Naive thymus-derived CD4-positive, alpha-beta T cell (primary cell): ENCODE measurements at regions of chr1 and their contacts with region 1.

Region 1: DNA sequence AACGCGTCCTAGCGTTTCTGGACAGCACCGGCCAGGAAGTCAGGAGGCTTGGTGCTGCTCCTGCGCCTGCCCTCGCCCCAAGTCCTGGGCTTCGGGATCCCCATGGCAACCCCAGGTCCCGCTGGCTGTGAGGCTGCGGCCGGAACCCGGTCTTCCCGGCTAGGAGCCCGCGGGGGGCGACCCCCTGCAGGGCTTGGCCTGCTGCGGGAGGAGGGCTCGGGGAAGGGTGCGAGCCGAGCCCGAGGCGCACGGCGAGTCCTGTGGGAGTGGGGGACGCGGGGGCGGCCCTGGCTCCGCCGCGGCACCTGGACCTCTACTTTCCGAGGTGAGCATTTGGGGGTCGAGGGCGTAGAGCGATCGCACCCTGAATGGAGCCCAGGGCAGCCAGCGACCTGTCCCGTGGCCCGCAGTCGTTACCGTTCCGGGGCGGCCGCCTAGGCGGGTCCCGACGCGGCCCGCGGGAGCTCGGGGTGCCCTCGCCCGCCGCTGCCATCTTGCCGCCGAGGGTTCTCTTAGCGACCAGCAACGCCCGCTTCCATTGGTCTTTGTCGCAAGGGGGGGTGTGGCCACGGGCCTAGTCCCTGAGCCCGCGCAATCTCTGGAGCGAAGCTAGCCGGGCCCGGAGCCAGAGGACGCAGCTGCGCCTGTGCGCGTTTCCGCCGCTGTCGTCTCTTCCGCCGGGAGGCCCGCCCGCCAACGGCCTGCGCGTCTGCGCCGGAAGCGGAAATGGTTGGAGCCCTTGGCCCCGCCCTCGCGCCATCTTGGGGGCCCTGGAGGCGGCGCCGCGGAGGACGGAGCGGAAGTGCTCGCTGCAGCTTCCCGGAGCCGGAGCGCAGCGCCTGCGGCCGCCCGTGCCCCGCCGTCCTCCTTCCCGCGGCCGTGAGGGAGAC is at the starts of genes MORN1 and RER1:
- DNase-seq: peak; percentile 96 to 100 (median 99)
- ATAC-seq: peak; percentile 98
- H3K4me3 ChIP-seq: peak within 1 kb of the TSS; percentile 77
- H3K4me3 Mint-ChIP-seq: peak within 1 kb of the TSS; percentile 80 to 93 (median 90)
- H3K27ac ChIP-seq: peak within 1 kb of the TSS; percentile 82
- H3K27ac Mint-ChIP-seq: peak within 1 kb of the TSS; percentile 63 to 96 (median 88)
- H3K4me1 ChIP-seq: peaks cover 23 to 33% of the 10 kb centered on the region in 2 donors
- H3K4me1 Mint-ChIP-seq: peaks cover 23 to 41% (median 31%) of the 10 kb centered on the region in 7 donors
- H3K27me3 ChIP-seq: no peaks in the 10 kb centered on the region
- H3K27me3 Mint-ChIP-seq: no peaks in the 10 kb centered on the region
- total RNA-seq, gene MORN1: 8.5 to 16.4 (median 11.2) TPM
- total RNA-seq, gene RER1: 71.0 to 150 (median 136) TPM

Region 2: DNA sequence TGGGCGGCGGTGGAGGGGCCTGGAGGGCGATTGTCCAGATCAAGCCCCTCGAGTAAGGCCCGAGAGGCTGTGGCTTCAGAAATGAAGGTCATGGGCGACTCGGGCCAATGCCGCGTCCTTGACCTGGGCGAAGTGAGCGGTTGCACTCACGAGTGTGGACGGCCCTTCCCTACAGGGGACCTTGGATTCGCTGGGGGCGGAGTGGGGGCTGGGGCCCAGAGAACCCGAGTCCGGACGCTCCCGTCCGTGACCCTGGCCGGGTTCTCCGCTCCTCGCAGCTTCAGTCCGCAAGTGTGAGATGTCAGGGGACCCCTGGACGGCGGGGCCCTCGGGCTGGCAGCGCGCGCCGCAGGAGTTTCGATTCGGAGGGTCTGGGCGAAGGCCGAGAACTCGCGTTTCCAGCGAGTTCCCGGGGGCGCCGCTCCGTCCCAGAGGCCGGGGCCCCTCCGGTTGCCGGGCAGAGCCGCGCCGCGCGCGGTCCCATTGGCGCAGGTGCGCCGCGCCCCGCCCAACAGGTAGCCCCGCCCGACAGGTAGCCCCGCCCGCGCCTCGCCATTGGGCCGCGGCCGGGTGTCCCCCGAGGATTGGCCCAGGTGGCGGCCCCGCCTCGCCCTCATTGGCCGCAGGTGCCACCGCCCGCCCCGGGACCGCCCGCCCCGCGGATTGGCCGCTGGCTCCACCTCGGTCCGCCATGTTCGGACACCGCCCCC is 341.4 kb before region 1 on chr1 and contains the start of gene PRKCZ:
- CTCF ChIA-PET with region 1: no interaction called
- POLR2A ChIA-PET with region 1: no interaction called
- intact Hi-C with region 1: loop called in 1 of 2 experiments (anchors 2 kb)
- DNase-seq: peak; percentile 76 to 96 (median 92)
- ATAC-seq: peak; percentile 99
- H3K4me3 ChIP-seq: peak within 1 kb of the TSS; percentile 73
- H3K4me3 Mint-ChIP-seq: peak within 1 kb of the TSS; percentile 64 to 89 (median 80)
- H3K27ac ChIP-seq: peak within 1 kb of the TSS; percentile 70
- H3K27ac Mint-ChIP-seq: peak within 1 kb of the TSS in 6 of 9 donors; percentile 5 to 82 (median 50)
- H3K4me1 ChIP-seq: peaks cover 7 to 14% of the 10 kb centered on the region in 2 donors
- H3K4me1 Mint-ChIP-seq: peaks cover 10 to 35% (median 22%) of the 10 kb centered on the region in 7 donors
- H3K27me3 ChIP-seq: no peaks in the 10 kb centered on the region
- H3K27me3 Mint-ChIP-seq: peaks cover 0 to 45% (median 5%) of the 10 kb centered on the region in 5 donors
- total RNA-seq, gene PRKCZ: 3.6 to 29.6 (median 24.5) TPM

Region 3: DNA sequence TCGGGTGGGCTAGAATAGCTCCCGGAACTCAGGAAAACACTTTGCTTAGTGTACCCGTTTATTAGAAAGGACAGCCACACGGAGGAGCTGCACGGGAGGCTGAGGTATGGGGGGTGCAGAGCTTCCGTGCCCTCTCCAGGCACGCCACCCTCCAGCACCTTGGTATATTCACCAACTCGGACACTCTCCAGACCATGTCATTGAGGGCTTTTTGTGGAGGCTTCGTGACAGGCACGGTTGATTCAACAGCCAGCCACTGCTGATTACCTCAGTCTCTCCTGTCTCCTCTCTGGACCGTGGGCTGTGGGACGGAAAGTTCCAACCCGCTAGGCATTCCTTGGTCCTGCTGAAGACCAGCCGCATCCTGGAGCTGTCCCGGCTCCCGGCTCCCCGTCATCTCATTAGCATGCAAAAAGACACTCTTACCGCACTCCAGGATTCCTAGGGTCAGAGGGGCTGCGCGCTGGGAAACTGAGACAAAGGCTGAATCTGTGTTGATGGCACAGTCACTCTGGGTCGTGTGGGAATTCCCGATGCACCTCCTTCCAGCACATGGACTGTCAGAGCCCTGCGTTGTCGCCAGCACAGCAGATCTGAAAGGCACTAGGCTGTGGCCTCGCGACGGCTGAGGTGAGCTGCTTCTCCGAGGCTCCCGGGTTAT is 275.5 kb before region 1 on chr1:
- CTCF ChIA-PET with region 1: no interaction called
- POLR2A ChIA-PET with region 1: no interaction called
- intact Hi-C with region 1: no loop called
- DNase-seq: peak in 1 of 9 donors; percentile 5
- ATAC-seq: no peak
- H3K4me3 ChIP-seq: no peak overlapping the region
- H3K4me3 Mint-ChIP-seq: no peak overlapping the region
- H3K27ac ChIP-seq: no peak overlapping the region
- H3K27ac Mint-ChIP-seq: peak overlapping the region in 1 of 9 donors; percentile 47
- H3K4me1 ChIP-seq: no peaks in the 10 kb centered on the region
- H3K4me1 Mint-ChIP-seq: peaks cover 0 to 15% (median 10%) of the 10 kb centered on the region in 7 donors
- H3K27me3 ChIP-seq: no peaks in the 10 kb centered on the region
- H3K27me3 Mint-ChIP-seq: peaks cover 0 to 1% (median 0%) of the 10 kb centered on the region in 5 donors

Region 4: GRCh38 chr1:2163205-2163604 is 228.1 kb before region 1 on chr1:
- CTCF ChIA-PET with region 1: no interaction called
- POLR2A ChIA-PET with region 1: no interaction called
- intact Hi-C with region 1: no loop called
- DNase-seq: peak in 1 of 9 donors; percentile 8
- ATAC-seq: no peak
- H3K4me3 ChIP-seq: no peak overlapping the region
- H3K4me3 Mint-ChIP-seq: peak overlapping the region in 1 of 10 donors; percentile 15
- H3K27ac ChIP-seq: no peak overlapping the region
- H3K27ac Mint-ChIP-seq: peak overlapping the region in 3 of 9 donors; percentile 41 to 76 (median 62)
- H3K4me1 ChIP-seq: no peaks in the 10 kb centered on the region
- H3K4me1 Mint-ChIP-seq: peaks cover 3 to 14% (median 9%) of the 10 kb centered on the region in 7 donors
- H3K27me3 ChIP-seq: no peaks in the 10 kb centered on the region
- H3K27me3 Mint-ChIP-seq: no peaks in the 10 kb centered on the region

Region 5: DNA sequence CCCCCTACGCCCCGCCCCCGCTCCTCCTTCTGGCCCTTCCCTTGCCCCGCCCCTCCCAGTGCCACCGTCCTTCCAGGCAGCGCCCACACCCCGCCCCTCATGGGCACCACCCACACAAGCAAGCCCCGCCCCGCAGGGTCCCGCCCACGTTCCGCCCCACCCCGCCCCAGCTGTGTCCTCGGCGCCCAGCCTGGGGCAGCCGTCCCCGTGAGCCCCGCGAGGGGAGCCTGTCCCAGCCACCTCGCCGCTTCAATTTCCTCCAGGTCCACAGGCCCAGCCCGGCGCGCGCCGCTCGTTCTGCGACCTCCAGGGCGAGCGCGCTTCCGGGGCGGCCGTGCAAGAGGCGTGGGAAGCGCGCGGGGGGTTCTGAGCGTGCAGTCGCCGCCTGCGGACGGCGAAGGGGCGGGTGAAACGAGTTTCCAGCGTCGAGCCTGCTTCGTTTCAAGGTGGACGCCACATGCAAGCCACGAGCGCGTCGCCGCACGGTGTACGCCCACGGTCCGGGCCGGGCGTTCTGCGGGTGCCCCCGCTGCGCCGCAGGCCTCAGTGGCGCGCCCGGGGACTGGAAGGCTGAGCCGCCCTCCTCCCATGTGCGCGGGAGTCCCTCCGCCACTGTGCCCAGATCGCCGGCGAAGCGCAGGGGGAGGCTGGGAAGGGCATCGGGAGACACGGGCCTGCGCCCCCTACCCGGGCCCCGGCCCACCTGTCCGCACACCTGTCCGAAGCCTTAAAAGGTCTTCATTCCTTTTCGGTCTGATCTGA is 185.9 kb before region 1 on chr1:
- CTCF ChIA-PET with region 1: no interaction called
- POLR2A ChIA-PET with region 1: interaction called, 9 read pairs
- intact Hi-C with region 1: loop called in 1 of 2 experiments (anchors 1 kb)
- DNase-seq: peak; percentile 86 to 94 (median 93)
- ATAC-seq: peak; percentile 98
- H3K4me3 ChIP-seq: peak overlapping the region; percentile 70
- H3K4me3 Mint-ChIP-seq: peak overlapping the region; percentile 53 to 79 (median 68)
- H3K27ac ChIP-seq: peak overlapping the region; percentile 60
- H3K27ac Mint-ChIP-seq: peak overlapping the region in 5 of 9 donors; percentile 17 to 65 (median 56)
- H3K4me1 ChIP-seq: peaks cover 0 to 6% of the 10 kb centered on the region in 2 donors
- H3K4me1 Mint-ChIP-seq: peaks cover 0 to 9% (median 4%) of the 10 kb centered on the region in 7 donors
- H3K27me3 ChIP-seq: no peaks in the 10 kb centered on the region
- H3K27me3 Mint-ChIP-seq: peaks cover 0 to 4% (median 0%) of the 10 kb centered on the region in 5 donors

Region 6: DNA sequence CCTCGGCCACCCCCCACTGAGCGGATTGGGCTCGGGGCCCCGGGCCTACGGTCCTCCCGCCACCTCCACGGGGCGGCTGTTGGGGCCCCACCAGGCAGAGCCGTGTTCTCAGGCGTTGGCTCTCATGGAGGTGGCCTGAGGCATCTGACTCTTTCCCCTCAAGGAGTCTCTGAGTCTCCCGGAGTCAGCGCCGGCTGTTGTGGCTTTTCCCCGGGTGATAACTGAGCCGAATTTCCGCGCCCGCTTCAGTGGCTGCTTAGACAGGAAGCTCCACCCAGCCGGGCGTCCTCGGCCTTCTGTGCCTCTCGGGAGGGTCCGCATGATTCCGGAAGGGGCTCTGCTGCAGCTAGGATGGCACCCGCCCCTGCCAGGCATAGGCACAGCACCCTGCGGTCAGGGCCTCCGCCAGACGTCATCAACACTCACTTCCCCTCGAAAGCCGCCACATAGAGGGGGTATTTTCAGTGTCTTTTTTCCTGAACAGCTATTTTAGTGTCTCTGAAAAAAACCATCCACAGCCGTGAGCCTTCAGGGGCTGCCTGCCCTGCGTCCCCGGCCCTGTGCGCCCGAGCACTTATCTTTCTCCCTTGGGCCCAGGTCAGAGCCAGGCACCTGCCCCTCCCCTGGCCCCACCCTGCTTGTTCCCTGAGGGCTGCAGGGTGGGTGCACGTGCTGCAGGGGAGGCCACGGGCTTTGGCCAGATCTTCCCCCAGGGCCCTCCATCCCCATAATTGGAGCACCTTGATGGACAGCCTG is 90.3 kb before region 1 on chr1:
- CTCF ChIA-PET with region 1: no interaction called
- POLR2A ChIA-PET with region 1: interaction called, 3 read pairs
- intact Hi-C with region 1: loop called in 1 of 2 experiments (anchors 1 kb)
- DNase-seq: peak; percentile 69 to 98 (median 97)
- ATAC-seq: peak; percentile 90
- H3K4me3 ChIP-seq: peak overlapping the region; percentile 77
- H3K4me3 Mint-ChIP-seq: peak overlapping the region; percentile 79 to 89 (median 85)
- H3K27ac ChIP-seq: peak overlapping the region; percentile 98
- H3K27ac Mint-ChIP-seq: peak overlapping the region; percentile 91 to 99 (median 99)
- H3K4me1 ChIP-seq: peaks cover 36 to 54% of the 10 kb centered on the region in 2 donors
- H3K4me1 Mint-ChIP-seq: peaks cover 14 to 72% (median 42%) of the 10 kb centered on the region in 7 donors
- H3K27me3 ChIP-seq: no peaks in the 10 kb centered on the region
- H3K27me3 Mint-ChIP-seq: no peaks in the 10 kb centered on the region

Region 7: DNA sequence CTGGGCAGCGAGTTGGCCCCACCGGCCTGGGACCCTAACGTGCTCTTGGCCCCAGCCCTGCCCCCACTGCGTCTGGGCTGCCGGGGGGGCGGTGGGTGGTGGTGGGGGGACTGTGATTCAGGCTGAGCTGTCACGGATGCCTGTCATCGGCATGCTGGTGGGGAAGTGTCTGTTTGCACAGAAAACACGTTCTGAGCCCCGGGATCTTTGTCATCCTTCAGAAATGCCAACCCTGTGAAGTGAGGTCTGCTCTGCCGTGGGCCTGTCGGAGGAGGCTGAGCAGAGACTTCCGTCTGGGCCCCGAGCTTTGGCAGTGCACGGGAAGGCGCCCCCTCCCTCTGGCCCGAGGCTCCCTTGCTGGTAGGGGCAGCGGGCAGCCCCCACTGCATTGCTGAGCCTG is 60.5 kb after region 1 on chr1:
- CTCF ChIA-PET with region 1: no interaction called
- POLR2A ChIA-PET with region 1: no interaction called
- intact Hi-C with region 1: no loop called
- DNase-seq: no peak
- ATAC-seq: no peak
- H3K4me3 ChIP-seq: no peak overlapping the region
- H3K4me3 Mint-ChIP-seq: no peak overlapping the region
- H3K27ac ChIP-seq: no peak overlapping the region
- H3K27ac Mint-ChIP-seq: no peak overlapping the region
- H3K4me1 ChIP-seq: no peaks in the 10 kb centered on the region
- H3K4me1 Mint-ChIP-seq: peaks cover 0 to 2% (median 0%) of the 10 kb centered on the region in 7 donors
- H3K27me3 ChIP-seq: no peaks in the 10 kb centered on the region
- H3K27me3 Mint-ChIP-seq: no peaks in the 10 kb centered on the region

Region 8: DNA sequence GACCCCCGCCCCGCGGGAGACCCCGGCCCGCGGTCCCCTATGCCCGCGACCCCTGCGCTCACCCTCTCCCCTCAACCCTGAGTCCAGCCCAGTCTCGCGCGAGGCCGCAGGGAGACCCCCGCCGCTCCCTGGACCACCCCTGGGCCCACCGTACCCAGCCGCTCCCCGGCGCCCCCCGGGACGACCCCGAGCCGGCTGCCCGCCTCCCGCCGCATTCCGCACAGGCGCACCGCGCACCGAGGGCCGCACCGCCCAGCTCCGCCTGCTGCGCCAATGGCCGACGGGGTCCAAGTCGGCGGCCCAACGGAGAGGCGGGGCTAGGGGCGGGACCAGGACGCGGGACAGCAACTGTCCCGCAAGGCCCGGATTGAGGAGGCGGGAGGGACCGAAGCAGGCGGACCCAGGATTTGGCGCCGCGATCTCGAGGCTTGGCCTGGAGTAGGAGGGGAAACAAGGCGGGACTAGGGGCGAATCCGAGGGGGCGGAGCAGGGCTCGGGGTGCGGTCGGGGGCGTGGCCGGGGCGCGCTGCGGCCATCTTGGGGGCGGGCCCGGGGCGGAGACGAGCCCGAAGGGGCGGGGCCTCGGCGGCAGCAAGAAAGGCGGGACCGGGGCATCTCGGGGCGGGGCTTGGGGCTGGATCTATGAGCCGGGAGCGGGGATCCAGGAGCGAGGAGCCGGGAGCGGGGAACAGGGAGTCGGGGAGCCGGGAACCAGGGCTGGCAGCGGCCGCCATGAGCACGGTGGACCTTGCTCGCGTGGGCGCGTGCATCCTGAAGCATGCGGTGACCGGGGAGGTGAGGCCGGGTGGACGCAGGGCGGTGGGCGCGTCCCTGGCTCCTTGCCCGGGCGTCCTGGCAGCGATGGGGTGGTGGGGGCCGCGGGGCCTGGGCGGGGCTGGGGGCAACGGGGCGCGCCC is 195.1 kb after region 1 on chr1 and contains the start of gene PRXL2B:
- CTCF ChIA-PET with region 1: no interaction called
- POLR2A ChIA-PET with region 1: interaction called, 4 read pairs
- intact Hi-C with region 1: loop called (anchors 1 kb)
- DNase-seq: peak; percentile 90 to 100 (median 96)
- ATAC-seq: peak; percentile 86
- H3K4me3 ChIP-seq: peak within 1 kb of the TSS; percentile 78
- H3K4me3 Mint-ChIP-seq: peak within 1 kb of the TSS; percentile 81 to 96 (median 92)
- H3K27ac ChIP-seq: peak within 1 kb of the TSS; percentile 87
- H3K27ac Mint-ChIP-seq: peak within 1 kb of the TSS; percentile 87 to 99 (median 96)
- H3K4me1 ChIP-seq: peaks cover 27 to 30% of the 10 kb centered on the region in 2 donors
- H3K4me1 Mint-ChIP-seq: peaks cover 24 to 45% (median 38%) of the 10 kb centered on the region in 7 donors
- H3K27me3 ChIP-seq: no peaks in the 10 kb centered on the region
- H3K27me3 Mint-ChIP-seq: no peaks in the 10 kb centered on the region
- total RNA-seq, gene PRXL2B: 12.3 to 37.0 (median 26.7) TPM

Region 9: GRCh38 chr1:2623571-2624337 is 232.5 kb after region 1 on chr1:
- CTCF ChIA-PET with region 1: no interaction called
- POLR2A ChIA-PET with region 1: no interaction called
- intact Hi-C with region 1: no loop called
- DNase-seq: no peak
- ATAC-seq: no peak
- H3K4me3 ChIP-seq: no peak overlapping the region
- H3K4me3 Mint-ChIP-seq: peak overlapping the region in 5 of 10 donors; percentile 13 to 63 (median 37)
- H3K27ac ChIP-seq: no peak overlapping the region
- H3K27ac Mint-ChIP-seq: peak overlapping the region in 1 of 9 donors; percentile 58
- H3K4me1 ChIP-seq: peaks cover 0 to 14% of the 10 kb centered on the region in 2 donors
- H3K4me1 Mint-ChIP-seq: peaks cover 0 to 37% (median 21%) of the 10 kb centered on the region in 7 donors
- H3K27me3 ChIP-seq: no peaks in the 10 kb centered on the region
- H3K27me3 Mint-ChIP-seq: peaks cover 22 to 47% (median 30%) of the 10 kb centered on the region in 5 donors

Region 10: DNA sequence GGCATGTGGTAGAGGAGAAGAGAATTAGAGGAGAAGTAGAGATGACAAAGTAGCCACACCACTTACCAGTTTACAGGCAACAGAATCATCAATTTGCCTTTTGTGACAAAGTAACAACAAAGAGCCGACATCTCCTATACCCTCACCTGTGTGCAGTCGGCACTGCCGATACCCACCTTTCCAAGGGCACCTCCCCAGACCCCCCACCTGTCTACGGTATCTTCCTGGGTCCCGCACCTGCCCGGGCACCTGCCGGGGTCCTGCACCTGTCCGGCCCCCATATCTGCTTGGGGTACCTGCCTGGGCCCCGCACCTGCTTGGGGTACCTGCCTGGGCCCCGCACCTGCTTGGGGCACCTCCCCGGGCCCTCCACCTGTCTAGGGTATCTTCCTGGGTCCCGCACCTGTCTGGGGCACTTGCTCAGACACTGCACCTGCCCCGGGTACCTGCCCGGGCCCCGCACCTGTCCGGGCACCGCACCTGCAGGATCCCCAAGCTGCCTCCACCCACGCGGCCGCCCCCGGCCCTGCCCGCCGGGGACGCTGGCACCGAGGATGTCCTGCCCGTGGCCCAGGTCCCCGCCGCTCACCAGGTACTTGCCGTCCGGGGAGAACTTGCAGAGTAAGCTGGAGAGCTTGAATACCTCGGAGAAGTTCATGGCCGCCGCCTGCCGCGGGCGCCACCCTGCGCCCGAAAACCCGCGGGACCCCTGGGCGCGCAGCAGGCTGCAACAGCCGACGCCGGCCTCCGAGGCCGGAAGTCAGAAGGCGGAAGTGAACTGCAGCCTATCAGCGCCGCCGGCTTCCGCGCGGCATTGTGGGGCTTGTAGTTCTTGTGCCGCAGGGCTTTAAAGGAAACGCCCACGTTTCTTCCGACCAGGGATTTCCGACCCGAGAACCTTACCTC is 1258.3 kb after region 1 on chr1 and contains the start of gene WRAP73:
- CTCF ChIA-PET with region 1: no interaction called
- POLR2A ChIA-PET with region 1: no interaction called
- intact Hi-C with region 1: loop called in 1 of 2 experiments (anchors 2 kb)
- DNase-seq: peak; percentile 76 to 88 (median 85)
- ATAC-seq: peak; percentile 99
- H3K4me3 ChIP-seq: peak within 1 kb of the TSS; percentile 63
- H3K4me3 Mint-ChIP-seq: peak within 1 kb of the TSS; percentile 79 to 91 (median 87)
- H3K27ac ChIP-seq: peak within 1 kb of the TSS; percentile 76
- H3K27ac Mint-ChIP-seq: peak within 1 kb of the TSS in 8 of 9 donors; percentile 2 to 82 (median 66)
- H3K4me1 ChIP-seq: peaks cover 11 to 16% of the 10 kb centered on the region in 2 donors
- H3K4me1 Mint-ChIP-seq: peaks cover 13 to 37% (median 33%) of the 10 kb centered on the region in 7 donors
- H3K27me3 ChIP-seq: peaks cover 3 to 20% of the 10 kb centered on the region in 2 donors
- H3K27me3 Mint-ChIP-seq: peaks cover 16 to 28% (median 28%) of the 10 kb centered on the region in 5 donors
- total RNA-seq, gene WRAP73: 28.1 to 42.0 (median 36.3) TPM